ENCODE measurements at regions of chr6 and their contacts with region 1.

Region 1: DNA sequence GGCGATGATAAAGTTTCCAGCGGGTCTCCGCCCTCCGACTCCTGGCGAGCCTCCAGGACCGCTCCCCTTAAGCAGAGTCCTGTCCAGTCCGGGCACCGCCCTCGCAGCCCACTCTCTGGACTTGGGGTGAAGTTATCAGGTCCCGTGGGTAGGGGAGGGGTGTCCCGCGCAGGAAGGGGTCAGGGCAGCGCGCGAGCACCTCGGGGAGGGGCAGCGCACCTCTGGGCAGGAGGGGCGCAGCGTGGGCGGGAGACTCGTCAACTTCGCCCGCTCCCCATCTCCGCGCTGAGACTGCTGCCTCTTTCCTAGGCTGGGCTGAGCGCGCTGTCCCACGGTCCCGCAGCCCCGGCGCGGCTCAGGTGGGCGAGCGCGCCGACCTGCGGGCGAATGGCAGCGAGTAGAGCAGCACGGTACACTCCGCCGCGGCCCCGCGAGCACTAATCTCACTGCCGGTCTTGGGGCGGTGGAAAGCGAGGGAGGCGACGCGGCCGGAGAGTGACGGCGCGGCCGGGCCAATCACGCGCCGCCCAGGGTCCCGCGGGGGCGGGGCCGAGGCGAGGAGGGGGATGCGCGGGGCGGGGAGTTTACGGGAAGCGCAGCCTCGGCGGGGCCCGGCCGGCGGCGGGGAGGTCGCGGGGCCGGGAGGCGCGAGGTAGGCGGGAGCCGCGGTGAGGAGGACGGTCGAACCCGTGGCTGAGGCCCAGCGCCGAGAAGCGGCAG is at the start of gene MAN1A1:
- DNase-seq: peak; percentile 94
- ATAC-seq: peak; percentile 96
- total RNA-seq, gene MAN1A1: 17.2 TPM

Region 2: GRCh38 chr6:119147101-119148053 is 202.1 kb before region 1 on chr6:
- intact Hi-C with region 1: loop called (anchors 10 kb)
- DNase-seq: peak; percentile 52
- ATAC-seq: peak; percentile 69